MCF 10A (cell line): ENCODE measurements at regions of chr7 and their contacts with region 1.

Region 1: GRCh38 chr7:108592646-108593201 is 23.1 kb downstream of the DNAJB9 start:
- DNase-seq: peak; percentile 11
- H3K4me3 Mint-ChIP-seq: no peak overlapping the region
- H3K27ac Mint-ChIP-seq: no peak overlapping the region
- H3K4me1 Mint-ChIP-seq: no peaks in the 10 kb centered on the region
- H3K27me3 Mint-ChIP-seq: no peaks in the 10 kb centered on the region
- CTCF ChIP-seq: no peak

Region 2: GRCh38 chr7:108358358-108358952 is 234.3 kb before region 1 on chr7:
- CTCF ChIA-PET with region 1: no interaction called
- POLR2A ChIA-PET with region 1: no interaction called
- intact Hi-C with region 1: no loop called
- DNase-seq: peak; percentile 69
- H3K4me3 Mint-ChIP-seq: no peak overlapping the region
- H3K27ac Mint-ChIP-seq: no peak overlapping the region
- H3K4me1 Mint-ChIP-seq: no peaks in the 10 kb centered on the region
- H3K27me3 Mint-ChIP-seq: no peaks in the 10 kb centered on the region
- CTCF ChIP-seq: no peak

Region 3: GRCh38 chr7:108569381-108570145 is 23.2 kb before region 1 on chr7 and contains the starts of genes DNAJB9 and THAP5:
- CTCF ChIA-PET with region 1: interaction called, 3 read pairs
- POLR2A ChIA-PET with region 1: interaction called, 10 read pairs
- intact Hi-C with region 1: no loop called
- DNase-seq: peak; percentile 99
- H3K4me3 Mint-ChIP-seq: peak within 1 kb of the TSS; percentile 97
- H3K27ac Mint-ChIP-seq: peak within 1 kb of the TSS; percentile 99
- H3K4me1 Mint-ChIP-seq: peaks cover 28% of the 10 kb centered on the region
- H3K27me3 Mint-ChIP-seq: no peaks in the 10 kb centered on the region
- CTCF ChIP-seq: no peak
- total RNA-seq, gene DNAJB9: 43.4 and 45.9 TPM in 2 replicates
- total RNA-seq, gene THAP5: 44.0 and 49.1 TPM in 2 replicates

Region 4: GRCh38 chr7:108825581-108825909 is 232.8 kb after region 1 on chr7:
- CTCF ChIA-PET with region 1: no interaction called
- POLR2A ChIA-PET with region 1: no interaction called
- intact Hi-C with region 1: no loop called
- DNase-seq: no peak
- H3K4me3 Mint-ChIP-seq: no peak overlapping the region
- H3K27ac Mint-ChIP-seq: no peak overlapping the region
- H3K4me1 Mint-ChIP-seq: no peaks in the 10 kb centered on the region
- H3K27me3 Mint-ChIP-seq: peaks cover 54% of the 10 kb centered on the region
- CTCF ChIP-seq: no peak